Mammary epithelial cell (primary cell): ENCODE measurements at regions of chr5 and their contacts with region 1.

Region 1: DNA sequence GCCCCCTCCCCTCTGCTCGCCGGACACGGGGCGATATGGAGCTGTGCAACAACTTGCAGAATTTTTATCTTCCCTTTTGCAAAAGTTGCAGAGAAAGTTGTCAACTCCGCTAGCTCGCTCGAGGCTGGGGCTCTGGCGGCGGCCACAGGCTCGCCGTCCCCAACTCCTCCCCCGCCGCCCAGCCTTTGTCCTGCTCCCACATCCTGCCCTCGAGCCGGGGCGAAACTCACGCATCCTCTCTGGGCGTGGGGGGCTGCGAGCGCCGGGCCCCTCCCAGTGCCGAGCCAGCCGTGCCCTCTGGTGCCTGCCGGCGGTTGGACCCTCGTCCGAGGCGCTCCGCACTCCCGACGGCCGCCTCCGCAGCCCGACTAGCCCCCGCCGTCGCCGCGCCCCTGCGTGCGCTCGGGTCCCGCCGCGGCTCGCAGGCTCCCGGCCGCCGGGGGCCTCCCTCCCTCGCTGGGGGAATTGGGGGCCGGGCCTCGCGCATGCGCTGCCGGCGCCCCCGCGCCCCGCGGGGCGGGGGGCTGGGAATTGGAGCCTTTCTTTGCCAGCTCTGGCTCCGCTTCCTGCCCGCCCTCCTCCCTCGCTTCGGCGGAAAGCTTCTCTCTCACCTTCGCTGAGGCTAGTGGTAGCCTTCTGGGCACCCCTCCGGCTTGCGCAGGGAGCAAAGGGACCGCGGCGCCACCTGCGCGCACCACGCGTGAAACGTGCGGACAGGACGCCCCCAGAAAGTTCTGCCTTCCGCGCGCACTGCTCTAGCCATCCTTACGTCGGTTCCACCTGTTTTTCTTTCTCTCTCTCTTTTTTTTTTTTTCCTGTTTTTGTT is at the start of gene CCNJL:
- DNase-seq: peak; percentile 64
- H3K4me3 ChIP-seq: peak within 1 kb of the TSS; percentile 71 to 87 (median 85)
- H3K27ac ChIP-seq: peak within 1 kb of the TSS; percentile 6
- H3K4me1 ChIP-seq: peaks cover 22% of the 10 kb centered on the region
- H3K27me3 ChIP-seq: no peaks in the 10 kb centered on the region
- CTCF ChIP-seq: no peak
- total RNA-seq, gene CCNJL: 13.7 to 17.0 TPM

Region 2: GRCh38 chr5:160221082-160221481 is 91.3 kb before region 1 on chr5:
- CTCF ChIA-PET with region 1: no interaction called
- dilution Hi-C with region 1: no loop called
- in situ Hi-C with region 1: no loop called
- intact Hi-C with region 1: no loop called
- DNase-seq: no peak
- H3K4me3 ChIP-seq: no peak overlapping the region
- H3K27ac ChIP-seq: no peak overlapping the region
- H3K4me1 ChIP-seq: no peaks in the 10 kb centered on the region
- H3K27me3 ChIP-seq: no peaks in the 10 kb centered on the region
- CTCF ChIP-seq: no peak

Region 3: DNA sequence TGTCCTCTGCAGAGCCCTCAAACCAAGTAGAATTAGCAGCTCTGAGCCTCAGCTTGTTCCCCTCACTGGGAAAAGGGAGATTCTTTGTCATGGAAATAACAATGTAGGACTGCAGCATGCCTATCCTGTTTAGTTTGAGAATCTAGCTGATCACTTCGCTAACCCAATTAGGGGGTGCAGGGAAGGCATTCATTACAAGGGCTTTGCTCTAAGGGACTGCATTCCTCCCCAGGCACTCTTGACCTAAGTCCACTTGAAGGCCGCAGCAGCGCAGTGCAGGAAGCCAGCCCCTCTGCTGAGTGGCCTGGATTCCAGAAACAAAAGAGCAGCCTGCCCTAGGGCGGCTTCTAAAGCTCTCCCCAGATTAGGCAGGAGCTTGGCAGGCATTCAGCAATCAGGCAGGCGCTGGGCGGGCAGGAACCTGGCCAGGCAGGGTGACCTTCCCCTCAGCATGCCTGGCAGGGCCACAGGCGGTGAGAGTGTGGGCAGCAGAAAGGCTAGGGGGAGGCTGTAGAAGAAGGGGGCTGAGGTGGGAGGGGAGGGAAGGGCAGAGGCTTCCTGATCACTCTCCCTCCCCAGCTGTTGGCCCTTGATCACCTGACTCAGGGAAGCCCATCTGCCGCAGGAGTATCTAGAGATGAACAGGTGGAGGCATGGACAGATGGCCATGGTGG is 24.8 kb before region 1 on chr5:
- CTCF ChIA-PET with region 1: no interaction called
- dilution Hi-C with region 1: no loop called
- in situ Hi-C with region 1: no loop called
- intact Hi-C with region 1: loop called (anchors 2 kb)
- DNase-seq: peak; percentile 65
- H3K4me3 ChIP-seq: no peak overlapping the region
- H3K27ac ChIP-seq: no peak overlapping the region
- H3K4me1 ChIP-seq: peaks cover 55% of the 10 kb centered on the region
- H3K27me3 ChIP-seq: no peaks in the 10 kb centered on the region
- CTCF ChIP-seq: no peak

Region 4: DNA sequence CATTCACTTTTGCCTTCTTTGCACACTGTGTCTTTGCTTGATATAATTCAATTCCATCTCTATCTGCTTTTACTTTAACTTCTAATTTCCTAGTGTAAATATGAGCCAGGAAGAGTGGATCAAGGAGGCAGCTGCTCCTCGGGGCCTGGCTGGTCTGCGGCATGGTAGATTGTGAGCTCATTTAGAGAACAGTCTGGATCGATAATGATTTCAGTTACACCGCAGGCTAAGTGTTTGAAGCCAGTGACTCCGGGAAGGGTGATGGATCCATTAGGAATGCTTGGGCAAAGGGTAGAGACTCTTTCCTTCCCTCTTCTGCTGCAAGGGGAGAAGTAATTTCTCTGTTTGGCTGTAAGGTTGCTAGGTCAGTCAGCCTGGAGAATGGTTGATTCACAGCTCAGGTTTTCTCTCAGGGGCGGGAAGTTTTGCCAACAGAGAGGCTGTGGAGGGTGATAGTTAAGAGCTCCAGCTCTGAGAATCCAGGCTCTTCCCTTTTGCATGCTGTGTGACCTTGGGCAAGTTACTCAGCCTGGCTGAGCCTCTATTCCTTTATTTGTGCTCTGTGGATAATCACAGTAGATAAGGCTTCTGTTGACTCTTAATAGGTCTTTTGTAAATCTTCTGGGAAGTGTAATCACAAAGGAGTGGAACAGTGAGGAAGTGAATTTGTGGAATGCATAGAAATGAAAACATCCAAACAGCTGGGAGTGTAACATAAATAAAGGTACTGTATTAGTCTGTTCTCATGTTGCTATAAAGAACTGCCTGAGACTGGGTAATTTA is 208.5 kb after region 1 on chr5:
- CTCF ChIA-PET with region 1: no interaction called
- dilution Hi-C with region 1: no loop called
- in situ Hi-C with region 1: no loop called
- intact Hi-C with region 1: no loop called
- DNase-seq: no peak
- H3K4me3 ChIP-seq: no peak overlapping the region
- H3K27ac ChIP-seq: no peak overlapping the region
- H3K4me1 ChIP-seq: no peaks in the 10 kb centered on the region
- H3K27me3 ChIP-seq: no peaks in the 10 kb centered on the region
- CTCF ChIP-seq: no peak